ENCODE measurements at regions of chr15 and their contacts with region 1.

Region 1: DNA sequence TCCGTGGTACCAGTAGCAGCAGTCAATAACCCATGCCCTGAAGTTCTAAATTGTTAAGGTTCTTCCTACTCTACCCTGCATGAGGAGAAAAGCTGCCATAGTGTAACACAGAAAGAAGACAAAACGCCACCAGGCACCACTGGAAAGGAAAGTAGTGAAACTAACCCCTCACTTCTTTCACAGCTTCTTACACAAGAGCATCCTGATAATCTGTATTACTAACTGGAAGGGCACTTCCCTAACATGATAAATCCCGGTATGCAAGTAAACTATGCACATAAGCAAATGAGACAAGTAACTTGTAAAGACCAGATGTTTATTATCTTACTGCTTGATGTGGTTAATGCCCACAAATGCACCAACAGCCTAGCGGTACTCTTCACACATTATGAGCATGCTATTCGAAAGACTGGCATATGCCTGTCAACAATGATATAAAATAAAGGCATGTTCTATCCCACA is 141.3 kb downstream of the ADAM10 start:
- DNase-seq: peak in 7 of 35 experiments; percentile 6 to 48 (median 11)
- ATAC-seq: peak in 3 of 4 experiments; percentile 47 to 65 (median 61)
- H3K4me3 ChIP-seq: no peak overlapping the region
- H3K4me3 Mint-ChIP-seq: peak overlapping the region in 2 of 3 donors; percentile 1 to 35
- H3K27ac ChIP-seq: peak overlapping the region; percentile 46
- H3K27ac Mint-ChIP-seq: peak overlapping the region; percentile 77 to 79
- H3K4me1 ChIP-seq: peaks cover 0 to 12% of the 10 kb centered on the region in 2 experiments
- H3K4me1 Mint-ChIP-seq: peaks cover 27 to 38% (median 33%) of the 10 kb centered on the region in 3 donors
- H3K27me3 ChIP-seq: no peaks in the 10 kb centered on the region
- H3K27me3 Mint-ChIP-seq: no peaks in the 10 kb centered on the region

Region 2: GRCh38 chr15:58715266-58715917 is 107.2 kb after region 1 on chr15:
- CTCF ChIA-PET with region 1: no interaction called
- POLR2A ChIA-PET with region 1: no interaction called
- DNase-seq: no peak
- ATAC-seq: no peak
- H3K4me3 ChIP-seq: no peak overlapping the region
- H3K4me3 Mint-ChIP-seq: no peak overlapping the region
- H3K27ac ChIP-seq: no peak overlapping the region
- H3K27ac Mint-ChIP-seq: no peak overlapping the region
- H3K4me1 ChIP-seq: peaks cover under 1 to 3% of the 10 kb centered on the region in 2 experiments
- H3K4me1 Mint-ChIP-seq: peaks cover 27 to 30% (median 29%) of the 10 kb centered on the region in 3 donors
- H3K27me3 ChIP-seq: no peaks in the 10 kb centered on the region
- H3K27me3 Mint-ChIP-seq: no peaks in the 10 kb centered on the region

Region 3: DNA sequence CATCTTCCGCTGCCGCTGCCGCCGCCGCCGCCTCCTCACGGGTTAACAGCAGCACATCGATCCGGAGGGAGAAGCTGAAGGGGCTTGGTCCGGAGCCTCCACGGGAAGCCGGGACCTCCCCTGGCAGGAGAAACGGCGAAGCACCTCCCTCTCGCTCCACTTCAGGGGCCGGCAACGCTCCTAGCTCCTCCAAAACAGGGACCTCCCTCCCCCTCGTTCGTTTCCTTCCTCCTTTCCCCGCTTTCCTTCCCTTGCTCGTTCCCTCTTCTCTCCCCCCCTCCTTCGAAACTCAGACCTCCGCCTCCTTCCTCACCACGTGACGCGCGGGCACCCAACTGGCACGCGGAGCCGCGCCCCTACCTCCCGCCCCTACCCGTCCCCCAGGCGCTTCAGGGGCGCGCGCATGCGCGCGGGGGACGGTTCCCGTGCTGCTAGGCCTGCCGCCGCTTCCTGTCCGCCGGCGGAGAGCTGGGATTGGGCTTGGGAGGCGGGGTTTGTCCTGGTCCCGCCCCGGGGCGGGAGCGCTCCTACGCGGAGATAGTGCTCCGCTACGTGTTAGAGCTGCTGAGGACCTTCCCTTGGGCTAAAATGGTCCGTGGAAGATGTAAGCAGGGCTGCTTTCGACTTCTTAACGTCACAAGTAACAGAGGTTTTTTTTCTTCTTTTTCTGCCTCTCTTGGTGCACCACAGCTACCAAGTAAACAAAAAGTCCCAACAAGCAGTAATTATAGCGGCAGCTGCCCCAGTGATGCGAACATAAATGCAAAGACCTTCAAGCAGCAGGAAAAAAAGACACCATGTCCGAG is 141.6 kb after region 1 on chr15 and contains the start of gene ADAM10:
- CTCF ChIA-PET with region 1: no interaction called
- POLR2A ChIA-PET with region 1: interaction called in 1 of 2 experiments, 17 read pairs
- DNase-seq: peak; percentile 88 to 98 (median 97)
- ATAC-seq: peak; percentile 93 to 95 (median 94)
- H3K4me3 ChIP-seq: peak within 1 kb of the TSS; percentile 94 to 99
- H3K4me3 Mint-ChIP-seq: peak within 1 kb of the TSS; percentile 92 to 98 (median 93)
- H3K27ac ChIP-seq: peak within 1 kb of the TSS; percentile 88
- H3K27ac Mint-ChIP-seq: peak within 1 kb of the TSS; percentile 89 to 91
- H3K4me1 ChIP-seq: peaks cover 15 to 20% of the 10 kb centered on the region in 2 experiments
- H3K4me1 Mint-ChIP-seq: peaks cover 39 to 43% (median 43%) of the 10 kb centered on the region in 3 donors
- H3K27me3 ChIP-seq: no peaks in the 10 kb centered on the region
- H3K27me3 Mint-ChIP-seq: no peaks in the 10 kb centered on the region
- total RNA-seq, gene ADAM10: 99.5 to 146 (median 113) TPM

Measured in T-cell (primary cell).